PC-3 (cell line): ENCODE measurements at regions of chr2 and their contacts with region 1.

Region 1: GRCh38 chr2:54558188-54559005 is 102.3 kb downstream of the SPTBN1 start:
- DNase-seq: peak; percentile 74
- ATAC-seq: peak; percentile 61
- H3K4me3 ChIP-seq: peak overlapping the region; percentile 78
- H3K27ac ChIP-seq: peak overlapping the region; percentile 96
- H3K4me1 ChIP-seq: peaks cover 37% of the 10 kb centered on the region
- H3K27me3 ChIP-seq: no peaks in the 10 kb centered on the region
- CTCF ChIP-seq: no peak

Region 2: GRCh38 chr2:54455563-54456361 is 102.6 kb before region 1 on chr2 and contains the start of gene SPTBN1:
- CTCF ChIA-PET with region 1: no interaction called
- POLR2A ChIA-PET with region 1: no interaction called
- intact Hi-C with region 1: no loop called
- DNase-seq: peak; percentile 66
- ATAC-seq: peak; percentile 69
- H3K4me3 ChIP-seq: peak within 1 kb of the TSS; percentile 93
- H3K27ac ChIP-seq: peak within 1 kb of the TSS; percentile 43
- H3K4me1 ChIP-seq: peaks cover 29% of the 10 kb centered on the region
- H3K27me3 ChIP-seq: no peaks in the 10 kb centered on the region
- CTCF ChIP-seq: no peak
- total RNA-seq, gene SPTBN1: 202 and 235 TPM in 2 replicates

Region 3: DNA sequence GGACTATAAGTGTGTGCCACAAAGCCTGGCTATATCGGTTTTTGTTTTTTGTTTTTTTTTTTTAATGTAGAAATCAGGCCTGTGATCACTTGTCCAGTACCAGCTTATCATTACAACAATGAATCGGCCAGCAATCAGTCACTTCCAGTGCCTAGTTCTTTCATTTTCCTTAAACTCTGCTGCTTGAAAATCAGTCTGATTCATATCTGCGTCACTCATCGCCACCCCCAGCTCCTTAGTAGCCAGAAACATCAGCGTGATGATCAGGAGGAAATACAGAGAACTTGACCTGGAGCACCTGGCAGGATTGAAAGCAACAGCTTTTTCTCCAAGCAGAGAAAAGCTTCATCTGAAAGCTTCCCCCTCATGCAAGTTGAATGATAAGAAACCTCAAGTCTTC is 26.8 kb before region 1 on chr2:
- CTCF ChIA-PET with region 1: no interaction called
- POLR2A ChIA-PET with region 1: interaction called, 5 read pairs
- intact Hi-C with region 1: loop called (anchors 2 kb)
- DNase-seq: peak; percentile 82
- ATAC-seq: peak; percentile 75
- H3K4me3 ChIP-seq: peak overlapping the region; percentile 49; the same call in 1 of the 2 replicates
- H3K27ac ChIP-seq: peak overlapping the region; percentile 86
- H3K4me1 ChIP-seq: peaks cover 37% of the 10 kb centered on the region
- H3K27me3 ChIP-seq: no peaks in the 10 kb centered on the region
- CTCF ChIP-seq: no peak

Region 4: GRCh38 chr2:54570925-54571694 is 12.7 kb after region 1 on chr2:
- CTCF ChIA-PET with region 1: interaction called, 3 read pairs
- POLR2A ChIA-PET with region 1: interaction called, 14 read pairs
- intact Hi-C with region 1: loop called (anchors 1 kb)
- DNase-seq: peak; percentile 95
- ATAC-seq: peak; percentile 76
- H3K4me3 ChIP-seq: peak overlapping the region; percentile 58
- H3K27ac ChIP-seq: peak overlapping the region; percentile 100
- H3K4me1 ChIP-seq: peaks cover 71% of the 10 kb centered on the region
- H3K27me3 ChIP-seq: no peaks in the 10 kb centered on the region
- CTCF ChIP-seq: no peak

Region 5: GRCh38 chr2:54613794-54614257 is 55.4 kb after region 1 on chr2:
- CTCF ChIA-PET with region 1: interaction called, 3 read pairs
- POLR2A ChIA-PET with region 1: no interaction called
- intact Hi-C with region 1: loop called (anchors 1 kb)
- DNase-seq: peak; percentile 75
- ATAC-seq: peak; percentile 91
- H3K4me3 ChIP-seq: 0 out of 2 replicates have a peak overlapping the region, but pooled peaks have one; percentile 3
- H3K27ac ChIP-seq: peak overlapping the region; percentile 89
- H3K4me1 ChIP-seq: peaks cover 28% of the 10 kb centered on the region
- H3K27me3 ChIP-seq: no peaks in the 10 kb centered on the region
- CTCF ChIP-seq: no peak